Panc1 (cell line): ENCODE measurements at regions of chr12 and their contacts with region 1.

Region 1: GRCh38 chr12:89529738-89530137 is 3.9 kb upstream of the POC1B start:
- DNase-seq: peak; percentile 41
- ATAC-seq: no peak
- H3K4me3 ChIP-seq: no peak overlapping the region
- H3K27ac ChIP-seq: no peak overlapping the region
- H3K4me1 ChIP-seq: peaks cover 4% of the 10 kb centered on the region; the same call in 1 of the 2 replicates
- H3K27me3 ChIP-seq: no peaks in the 10 kb centered on the region
- CTCF ChIP-seq: peak; percentile 73; the same call in 1 of the 2 replicates

Region 2: DNA sequence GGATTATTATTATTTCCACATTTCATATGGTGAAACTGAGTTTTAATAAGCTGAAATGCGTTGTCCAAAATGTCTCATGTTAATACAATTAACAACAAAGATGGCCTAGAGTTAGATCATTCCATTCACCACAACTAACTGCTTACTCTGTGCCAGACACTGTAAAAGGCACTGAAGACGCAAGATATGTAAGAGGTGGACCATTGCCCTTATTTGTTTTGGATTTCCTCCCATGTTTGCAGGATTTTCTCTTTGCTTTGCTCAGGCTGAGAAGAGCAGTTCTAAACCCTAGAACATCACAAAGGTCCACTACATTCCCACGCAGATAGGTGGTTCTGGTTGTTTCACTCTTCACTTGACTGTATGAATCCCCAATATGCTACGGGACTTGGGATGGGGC is 625.0 kb before region 1 on chr12:
- CTCF ChIA-PET with region 1: no interaction called
- POLR2A ChIA-PET with region 1: no interaction called
- in situ Hi-C with region 1: no loop called
- intact Hi-C with region 1: no loop called
- DNase-seq: no peak
- ATAC-seq: no peak
- H3K4me3 ChIP-seq: no peak overlapping the region
- H3K27ac ChIP-seq: no peak overlapping the region
- H3K4me1 ChIP-seq: no peaks in the 10 kb centered on the region
- H3K27me3 ChIP-seq: no peaks in the 10 kb centered on the region
- CTCF ChIP-seq: no peak

Region 3: DNA sequence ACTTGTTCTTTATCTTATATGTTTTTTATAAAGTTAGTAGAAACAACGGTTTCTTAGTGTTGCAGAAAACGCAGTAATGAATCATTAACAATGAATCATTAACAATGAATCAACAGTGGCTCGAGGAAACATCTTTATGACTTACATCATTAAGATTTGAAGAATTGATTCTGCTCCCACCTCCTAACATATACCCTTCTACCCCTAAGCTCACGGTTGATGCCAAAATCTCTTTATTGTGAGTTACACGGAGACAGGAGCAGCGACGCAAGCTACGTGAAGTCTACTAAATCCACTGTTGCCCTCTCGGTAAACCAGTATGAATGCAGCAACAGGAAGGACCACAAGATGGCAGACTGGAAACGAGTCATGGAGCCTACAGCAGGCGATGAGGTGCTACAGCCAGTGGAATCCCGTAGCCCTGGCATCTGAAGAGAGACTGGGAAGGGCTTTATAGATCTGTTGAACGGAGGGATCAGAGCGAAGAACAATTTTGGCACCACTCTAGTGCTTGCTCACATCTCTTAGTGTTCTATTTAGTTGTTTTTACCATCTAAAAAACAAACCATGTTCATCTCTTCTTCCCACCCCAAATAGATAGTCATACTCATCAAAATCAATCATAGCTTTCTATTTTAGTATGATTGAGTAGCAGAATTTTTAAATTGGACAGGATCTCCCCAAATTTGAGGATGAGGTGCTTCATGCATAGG is 510.2 kb before region 1 on chr12:
- CTCF ChIA-PET with region 1: no interaction called
- POLR2A ChIA-PET with region 1: no interaction called
- in situ Hi-C with region 1: no loop called
- intact Hi-C with region 1: loop called (anchors 2 kb)
- DNase-seq: peak; percentile 85
- ATAC-seq: peak; percentile 99
- H3K4me3 ChIP-seq: peak overlapping the region; percentile 23 to 45
- H3K27ac ChIP-seq: no peak overlapping the region
- H3K4me1 ChIP-seq: peaks cover 2% of the 10 kb centered on the region; the same call in 1 of the 2 replicates
- H3K27me3 ChIP-seq: peaks cover 5% of the 10 kb centered on the region
- CTCF ChIP-seq: peak; percentile 90

Region 4: DNA sequence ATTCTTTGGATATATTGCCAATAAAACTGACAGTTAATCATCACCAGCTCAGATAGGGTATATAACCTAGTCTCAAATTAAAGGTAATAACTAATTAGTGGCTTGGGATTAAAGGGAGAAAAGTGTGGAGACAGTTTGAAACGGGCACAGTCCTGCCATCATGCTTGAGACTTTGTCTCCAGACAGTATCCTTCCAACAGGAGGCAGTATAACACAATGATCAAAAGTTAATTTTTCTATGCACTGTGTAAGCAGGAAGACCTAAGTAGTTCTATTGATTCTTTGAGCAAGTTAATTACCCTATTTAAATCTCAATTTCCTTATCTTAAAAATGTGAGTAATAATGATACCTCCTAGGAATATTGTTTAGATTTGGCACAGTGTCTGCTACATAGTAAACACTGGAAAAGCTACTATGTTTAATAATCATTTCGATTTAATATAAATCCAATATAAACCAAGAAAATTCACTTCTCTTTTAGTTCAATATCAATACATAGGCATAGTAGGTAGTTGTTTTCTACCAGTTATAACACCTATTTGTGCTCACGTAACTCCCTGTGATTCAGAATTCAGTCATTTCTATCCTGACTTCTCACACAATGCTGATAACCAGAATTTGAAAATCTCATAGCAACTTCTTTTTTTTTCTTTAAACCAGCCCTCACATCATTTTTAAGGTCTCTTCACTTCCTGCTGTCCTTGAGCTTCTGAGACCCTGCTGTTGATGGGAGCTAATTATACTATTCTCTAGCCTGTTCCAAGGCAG is 58.8 kb before region 1 on chr12:
- CTCF ChIA-PET with region 1: no interaction called
- POLR2A ChIA-PET with region 1: no interaction called
- in situ Hi-C with region 1: no loop called
- intact Hi-C with region 1: loop called (anchors 2 kb)
- DNase-seq: peak; percentile 33
- ATAC-seq: peak; percentile 90
- H3K4me3 ChIP-seq: no peak overlapping the region
- H3K27ac ChIP-seq: no peak overlapping the region
- H3K4me1 ChIP-seq: no peaks in the 10 kb centered on the region
- H3K27me3 ChIP-seq: no peaks in the 10 kb centered on the region
- CTCF ChIP-seq: peak; percentile 71; the same call in 1 of the 2 replicates